ENCODE measurements at regions of chr11 and their contacts with region 1.

Region 1: DNA sequence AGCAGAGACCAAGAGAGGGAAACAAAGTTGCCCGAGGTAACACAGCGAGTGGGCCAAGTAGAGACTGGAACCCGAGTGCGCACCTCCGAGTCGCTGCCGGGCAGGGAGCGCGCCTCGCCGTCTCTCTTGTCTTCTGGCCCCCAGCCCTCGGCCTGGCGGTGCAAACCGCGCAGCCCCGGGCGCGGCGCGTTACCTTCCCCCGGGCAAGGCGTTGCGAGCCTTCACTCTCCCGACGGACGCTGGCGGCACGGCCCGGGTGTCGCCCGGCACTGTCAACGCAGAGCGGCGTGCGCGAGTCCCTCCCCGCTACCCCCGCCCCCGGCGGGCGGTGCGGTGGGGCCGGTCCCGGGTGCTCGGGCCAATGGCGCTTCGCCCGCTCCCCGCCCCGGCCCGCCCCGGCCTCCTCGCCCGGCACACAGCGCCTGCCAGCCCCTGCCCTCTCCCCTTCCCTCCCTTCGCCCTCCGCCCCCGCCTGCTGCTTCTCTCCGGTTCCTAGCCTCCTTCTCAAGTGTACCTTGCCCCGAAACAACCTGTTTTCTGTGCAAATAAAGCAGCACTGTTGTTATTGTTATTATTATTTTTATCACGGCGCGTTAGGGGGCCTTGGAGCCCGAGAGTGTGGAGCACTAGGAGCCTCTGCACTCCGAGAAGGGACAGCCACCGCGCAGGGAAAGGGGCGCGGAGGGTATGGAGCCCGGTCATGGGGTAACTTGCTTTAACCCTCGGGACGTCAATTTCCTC is at the start of gene SYTL2:
- DNase-seq: peak in 1 of 2 donors; percentile 85
- H3K4me3 ChIP-seq: peak within 1 kb of the TSS; percentile 63 to 89
- H3K27ac ChIP-seq: peak within 1 kb of the TSS; percentile 39 to 62
- H3K4me1 ChIP-seq: peaks cover 0 to 9% of the 10 kb centered on the region in 2 donors
- H3K27me3 ChIP-seq: no peaks in the 10 kb centered on the region
- CTCF ChIP-seq: no peak
- total RNA-seq, gene SYTL2: 151 TPM

Region 2: GRCh38 chr11:85595285-85595884 is 215.7 kb before region 1 on chr11:
- intact Hi-C with region 1: loop called (anchors 5 kb)
- DNase-seq: no peak
- H3K4me3 ChIP-seq: no peak overlapping the region
- H3K27ac ChIP-seq: no peak overlapping the region
- H3K4me1 ChIP-seq: no peaks in the 10 kb centered on the region
- H3K27me3 ChIP-seq: no peaks in the 10 kb centered on the region
- CTCF ChIP-seq: peak; percentile 31 to 63 (median 37)

Region 3: GRCh38 chr11:85682330-85683305 is 128.4 kb before region 1 on chr11:
- intact Hi-C with region 1: loop called (anchors 5 kb)
- DNase-seq: peak in 1 of 2 donors; percentile 71
- H3K4me3 ChIP-seq: peak overlapping the region; percentile 58 to 74
- H3K27ac ChIP-seq: no peak overlapping the region
- H3K4me1 ChIP-seq: peaks cover 5 to 6% of the 10 kb centered on the region in 2 donors
- H3K27me3 ChIP-seq: no peaks in the 10 kb centered on the region
- CTCF ChIP-seq: no peak

Region 4: GRCh38 chr11:85725510-85726258 is 85.4 kb before region 1 on chr11:
- intact Hi-C with region 1: no loop called
- DNase-seq: no peak
- H3K4me3 ChIP-seq: no peak overlapping the region
- H3K27ac ChIP-seq: no peak overlapping the region
- H3K4me1 ChIP-seq: no peaks in the 10 kb centered on the region
- H3K27me3 ChIP-seq: no peaks in the 10 kb centered on the region
- CTCF ChIP-seq: no peak

Region 5: DNA sequence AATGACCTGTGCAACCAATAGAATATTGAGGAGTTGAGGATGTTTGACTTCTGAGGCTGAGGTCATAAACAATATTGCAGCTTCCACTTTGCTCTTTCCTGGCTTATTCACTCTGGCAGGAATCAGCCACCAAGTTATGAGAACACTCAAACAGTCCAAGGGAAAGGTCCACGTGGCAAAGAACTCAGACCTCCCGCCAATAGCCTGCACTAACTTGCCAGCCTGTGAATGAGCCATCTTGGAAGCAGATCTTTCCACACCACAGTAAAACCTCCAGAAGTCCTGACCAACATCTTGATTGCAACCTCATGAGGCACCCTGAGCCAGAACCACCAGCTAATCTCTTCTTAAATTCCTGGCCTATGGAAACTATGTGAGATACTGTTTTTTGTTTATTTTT is 280.5 kb after region 1 on chr11:
- intact Hi-C with region 1: no loop called
- DNase-seq: peak; percentile 14 to 87
- H3K4me3 ChIP-seq: no peak overlapping the region
- H3K27ac ChIP-seq: peak overlapping the region; percentile 76 to 77
- H3K4me1 ChIP-seq: peaks cover 0 to 12% of the 10 kb centered on the region in 2 donors
- H3K27me3 ChIP-seq: no peaks in the 10 kb centered on the region
- CTCF ChIP-seq: no peak

Measured in ascending aorta (tissue), 2 donors.